HepG2 (cell line): ENCODE measurements at regions of chr4 and their contacts with region 1.

Region 1: GRCh38 chr4:26161030-26161824 is 159.6 kb upstream of the RBPJ start:
- DNase-seq: peak; percentile 29
- ATAC-seq: peak; percentile 96
- H3K4me3 ChIP-seq: no peak overlapping the region
- H3K27ac ChIP-seq: no peak overlapping the region
- H3K4me1 ChIP-seq: no peaks in the 10 kb centered on the region
- H3K27me3 ChIP-seq: no peaks in the 10 kb centered on the region
- CTCF ChIP-seq: peak; percentile 51
- EP300 ChIP-seq: no peak
- POLR2A ChIP-seq: no peak
- RAD21 ChIP-seq: no peak

Region 2: DNA sequence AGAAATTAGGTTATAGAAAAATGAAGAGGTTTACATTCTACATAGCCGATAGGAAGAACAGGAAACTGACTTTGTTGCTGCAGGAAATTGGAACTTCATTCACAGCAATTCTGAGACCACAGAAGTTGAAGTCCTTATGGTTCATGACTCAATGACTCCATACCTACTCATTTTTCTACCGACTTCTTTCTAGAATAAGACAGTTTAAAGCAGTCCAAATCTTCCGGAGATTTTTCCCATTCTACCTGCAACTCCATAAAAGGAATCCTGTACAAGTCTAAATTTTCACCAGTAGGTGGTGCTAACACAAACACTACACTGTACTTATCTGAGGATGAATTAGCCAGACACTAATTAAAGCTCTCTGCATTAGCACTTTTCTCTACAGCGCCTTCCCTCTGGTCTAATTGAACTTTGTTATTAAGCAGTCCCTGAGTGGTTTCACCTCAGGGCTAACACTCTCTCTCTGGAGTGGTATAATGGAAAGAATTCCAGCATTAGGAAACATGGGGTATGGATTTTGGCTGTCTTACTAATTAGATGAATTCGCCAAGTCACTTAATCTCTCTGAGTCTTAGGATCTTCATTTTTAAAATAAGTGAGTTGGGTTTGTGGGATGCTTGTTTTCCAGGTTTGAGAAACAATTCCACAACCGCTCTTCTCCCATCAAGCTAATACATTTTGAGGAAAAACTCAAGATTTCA is 79.3 kb before region 1 on chr4:
- CTCF ChIA-PET with region 1: no interaction called
- POLR2A ChIA-PET with region 1: no interaction called
- in situ Hi-C with region 1: no loop called
- intact Hi-C with region 1: loop called (anchors 1 kb)
- DNase-seq: peak; percentile 32
- ATAC-seq: peak; percentile 85
- H3K4me3 ChIP-seq: no peak overlapping the region
- H3K27ac ChIP-seq: no peak overlapping the region
- H3K4me1 ChIP-seq: no peaks in the 10 kb centered on the region
- H3K27me3 ChIP-seq: peaks cover 2 to 6% of the 10 kb centered on the region in 2 experiments; a peak in 1 of 5 replicates
- CTCF ChIP-seq: peak; percentile 68
- EP300 ChIP-seq: no peak
- POLR2A ChIP-seq: no peak
- RAD21 ChIP-seq: 0 out of 2 replicates have a peak, but pooled peaks have one; percentile 24